Caco-2 (cell line): ENCODE measurements at regions of chr6 and their contacts with region 1.

Region 1: DNA sequence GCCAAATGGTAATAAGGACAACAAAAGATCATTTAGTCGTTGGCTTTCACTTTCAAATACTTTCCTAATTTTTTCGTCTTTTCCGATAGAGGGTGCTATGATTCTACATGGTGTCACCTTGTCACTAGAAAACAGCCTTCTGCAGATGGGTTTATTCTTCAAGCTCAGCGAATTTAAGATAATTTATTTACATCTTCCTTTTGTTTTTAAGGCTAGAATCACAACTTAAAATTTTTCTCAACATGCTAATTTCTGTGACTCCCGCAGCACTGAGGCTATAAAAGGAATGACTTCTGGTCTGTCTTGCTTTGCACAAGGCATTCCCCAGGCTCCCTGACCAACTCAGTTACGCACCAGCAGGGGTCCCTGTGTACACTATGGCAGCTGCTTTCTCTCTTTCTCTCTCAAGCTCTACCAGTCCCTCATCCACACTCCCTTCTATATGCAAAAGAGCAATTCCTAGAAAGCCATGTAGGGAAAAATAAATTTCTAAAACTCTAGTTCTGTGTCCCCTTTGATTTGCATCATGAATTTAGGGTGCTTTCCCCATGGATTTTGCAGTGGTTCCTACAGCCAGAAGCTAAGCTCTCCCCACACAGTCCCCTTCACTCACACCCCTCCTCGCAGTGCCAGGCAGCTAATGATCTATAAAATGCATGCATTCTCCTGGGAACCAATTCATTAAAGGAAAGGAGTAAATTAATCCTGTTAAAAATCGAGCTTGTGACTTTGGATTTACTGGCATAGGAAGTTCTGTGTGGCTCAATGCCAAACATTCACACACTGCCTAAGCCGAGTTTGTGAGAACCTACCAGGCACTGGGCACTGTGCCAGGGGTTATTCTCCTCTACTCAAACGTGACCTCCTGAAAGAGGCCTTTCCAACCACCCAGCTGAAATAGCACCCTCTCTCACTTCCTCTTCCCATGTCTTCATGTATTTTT is 74.5 kb downstream of the DCDC2 start:
- DNase-seq: peak; percentile 79 to 81
- H3K4me3 ChIP-seq: peak overlapping the region; percentile 8; the same call in 1 of the 2 replicates
- H3K4me3 Mint-ChIP-seq: no peak overlapping the region
- H3K27ac Mint-ChIP-seq: no peak overlapping the region
- H3K4me1 ChIP-seq: peaks cover 5% of the 10 kb centered on the region; the same call in 1 of the 2 replicates
- H3K4me1 Mint-ChIP-seq: no peaks in the 10 kb centered on the region
- H3K27me3 ChIP-seq: no peaks in the 10 kb centered on the region
- H3K27me3 Mint-ChIP-seq: no peaks in the 10 kb centered on the region
- CTCF ChIP-seq: peak; percentile 85

Region 2: GRCh38 chr6:24313251-24314141 is 30.2 kb after region 1 on chr6:
- CTCF ChIA-PET with region 1: interaction called, 12 read pairs
- POLR2A ChIA-PET with region 1: no interaction called
- intact Hi-C with region 1: no loop called
- DNase-seq: peak; percentile 83 to 90
- H3K4me3 ChIP-seq: no peak overlapping the region
- H3K4me3 Mint-ChIP-seq: peak overlapping the region; percentile 47
- H3K27ac Mint-ChIP-seq: peak overlapping the region; percentile 83
- H3K4me1 ChIP-seq: peaks cover 32% of the 10 kb centered on the region
- H3K4me1 Mint-ChIP-seq: peaks cover 42% of the 10 kb centered on the region
- H3K27me3 ChIP-seq: no peaks in the 10 kb centered on the region
- H3K27me3 Mint-ChIP-seq: no peaks in the 10 kb centered on the region
- CTCF ChIP-seq: no peak

Region 3: DNA sequence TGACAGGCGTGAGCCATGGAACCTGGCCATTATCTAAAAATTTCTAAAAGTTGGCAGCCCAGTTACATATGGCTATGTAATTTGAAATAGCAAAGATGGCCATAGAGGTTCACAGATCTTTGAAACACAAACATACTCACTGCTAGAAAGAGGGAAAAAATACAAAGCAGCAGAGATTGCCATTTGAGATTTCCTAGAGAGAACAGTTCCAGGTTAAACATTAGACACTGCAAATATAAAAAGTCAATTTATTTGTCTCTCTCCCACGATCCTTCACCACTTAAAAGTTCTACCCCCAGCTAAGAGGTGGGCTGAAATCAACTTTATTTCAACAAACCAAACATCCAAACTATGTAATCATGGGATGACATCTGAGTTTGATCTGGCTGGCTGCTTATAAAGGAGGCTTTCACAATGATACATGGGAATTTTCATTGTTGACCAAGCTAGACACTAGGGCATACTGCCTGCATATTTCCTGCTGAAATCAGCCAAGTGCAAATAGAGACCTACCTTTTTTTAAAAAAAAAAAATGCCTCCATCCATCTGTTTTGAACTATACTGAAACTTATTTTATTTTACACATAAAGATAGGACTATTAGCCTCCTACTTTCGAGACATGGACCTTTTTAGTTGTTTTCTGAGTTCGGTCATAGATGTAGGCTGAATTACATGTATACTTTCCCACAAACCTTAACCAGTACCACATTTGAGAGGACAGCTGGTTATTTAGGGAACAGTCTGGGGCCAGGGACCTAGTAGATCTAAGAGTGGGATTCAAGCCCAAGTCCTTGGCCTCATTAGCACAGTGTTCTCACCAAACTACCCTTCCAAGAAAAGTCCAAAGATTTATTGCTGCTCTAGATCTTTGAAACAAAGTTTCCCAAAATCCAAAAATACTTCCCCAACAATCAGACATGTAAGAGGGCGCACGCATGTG is 58.0 kb after region 1 on chr6:
- CTCF ChIA-PET with region 1: no interaction called
- POLR2A ChIA-PET with region 1: no interaction called
- intact Hi-C with region 1: loop called (anchors 1 kb)
- DNase-seq: peak; percentile 52 to 72
- H3K4me3 ChIP-seq: no peak overlapping the region
- H3K4me3 Mint-ChIP-seq: peak overlapping the region; percentile 55
- H3K27ac Mint-ChIP-seq: peak overlapping the region; percentile 92
- H3K4me1 ChIP-seq: peaks cover 46% of the 10 kb centered on the region
- H3K4me1 Mint-ChIP-seq: peaks cover 66% of the 10 kb centered on the region
- H3K27me3 ChIP-seq: no peaks in the 10 kb centered on the region
- H3K27me3 Mint-ChIP-seq: no peaks in the 10 kb centered on the region
- CTCF ChIP-seq: no peak

Region 4: GRCh38 chr6:24385536-24386269 is 102.4 kb after region 1 on chr6:
- CTCF ChIA-PET with region 1: interaction called, 20 read pairs
- POLR2A ChIA-PET with region 1: no interaction called
- intact Hi-C with region 1: loop called (anchors 1 kb)
- DNase-seq: peak in 1 of 2 experiments; percentile 29
- H3K4me3 ChIP-seq: no peak overlapping the region
- H3K4me3 Mint-ChIP-seq: no peak overlapping the region
- H3K27ac Mint-ChIP-seq: no peak overlapping the region
- H3K4me1 ChIP-seq: peaks cover 21% of the 10 kb centered on the region
- H3K4me1 Mint-ChIP-seq: peaks cover 28% of the 10 kb centered on the region
- H3K27me3 ChIP-seq: no peaks in the 10 kb centered on the region
- H3K27me3 Mint-ChIP-seq: no peaks in the 10 kb centered on the region
- CTCF ChIP-seq: no peak

Region 5: GRCh38 chr6:24402697-24403501 is 119.6 kb after region 1 on chr6 and contains the start of gene MRS2:
- CTCF ChIA-PET with region 1: interaction called, 6 read pairs
- POLR2A ChIA-PET with region 1: no interaction called
- intact Hi-C with region 1: loop called (anchors 1 kb)
- DNase-seq: peak; percentile 95 to 96
- H3K4me3 ChIP-seq: peak within 1 kb of the TSS; percentile 64
- H3K4me3 Mint-ChIP-seq: peak within 1 kb of the TSS; percentile 99
- H3K27ac Mint-ChIP-seq: peak within 1 kb of the TSS; percentile 91
- H3K4me1 ChIP-seq: peaks cover 33% of the 10 kb centered on the region
- H3K4me1 Mint-ChIP-seq: peaks cover 12% of the 10 kb centered on the region
- H3K27me3 ChIP-seq: no peaks in the 10 kb centered on the region
- H3K27me3 Mint-ChIP-seq: no peaks in the 10 kb centered on the region
- CTCF ChIP-seq: no peak
- total RNA-seq, gene MRS2: 60.9 and 62.3 TPM in 2 replicates